ENCODE measurements at regions of chr19 and their contacts with region 1.

Region 1: DNA sequence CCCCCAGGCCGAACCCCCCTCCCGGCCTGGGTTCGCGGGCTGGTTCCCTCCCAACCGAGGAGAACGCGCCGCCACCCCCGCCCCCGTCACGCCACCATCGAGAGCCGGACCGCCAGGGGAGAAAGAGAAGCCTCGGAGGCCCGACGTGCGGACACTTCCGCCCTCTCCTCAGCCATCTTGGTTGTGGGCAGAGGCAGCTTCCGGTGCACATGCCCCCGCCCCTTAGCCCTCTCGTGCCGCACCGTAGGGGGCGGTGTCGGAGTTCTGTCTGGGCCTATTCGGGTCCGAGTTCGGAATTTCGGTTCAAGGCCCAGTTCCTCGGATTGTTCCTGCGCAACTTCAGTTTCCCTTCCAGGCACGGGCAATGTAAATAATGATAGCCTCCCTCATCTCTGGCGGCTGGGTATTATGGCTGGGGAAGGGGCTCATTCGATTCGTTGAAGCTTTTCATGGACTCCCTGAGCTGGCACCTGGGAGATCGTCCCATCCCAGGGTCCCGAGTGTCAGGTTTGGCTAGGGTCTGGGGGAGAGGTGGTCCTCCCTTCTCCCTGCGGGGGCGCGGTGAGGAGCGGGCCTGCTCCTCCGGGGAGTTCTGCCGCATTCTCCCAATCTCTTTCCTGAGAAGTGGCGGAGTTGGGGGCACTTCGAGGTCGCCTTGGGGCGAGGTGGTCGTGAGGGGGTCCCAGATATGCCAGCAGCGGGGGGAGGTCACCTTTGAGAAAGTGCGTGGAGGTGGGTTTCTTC is at the starts of genes IER2 and STX10:
- DNase-seq: peak; percentile 97 to 98 (median 97)
- ATAC-seq: peak; percentile 73 to 78 (median 78)
- H3K4me3 ChIP-seq: peak within 1 kb of the TSS; percentile 45 to 98 (median 91)
- H3K27ac ChIP-seq: peak within 1 kb of the TSS; percentile 87 to 100 (median 98)
- H3K4me1 ChIP-seq: peaks cover 0 to 35% (median 14%) of the 10 kb centered on the region in 12 donors
- H3K27me3 ChIP-seq: no peaks in the 10 kb centered on the region
- CTCF ChIP-seq: peak; percentile 44 to 85 (median 64)
- POLR2A ChIP-seq: peak in 1 of 2 donors; percentile 76
- total RNA-seq, gene IER2: 17.6 to 101 (median 29.1) TPM
- total RNA-seq, gene STX10: 24.0 to 48.8 (median 35.8) TPM

Region 2: DNA sequence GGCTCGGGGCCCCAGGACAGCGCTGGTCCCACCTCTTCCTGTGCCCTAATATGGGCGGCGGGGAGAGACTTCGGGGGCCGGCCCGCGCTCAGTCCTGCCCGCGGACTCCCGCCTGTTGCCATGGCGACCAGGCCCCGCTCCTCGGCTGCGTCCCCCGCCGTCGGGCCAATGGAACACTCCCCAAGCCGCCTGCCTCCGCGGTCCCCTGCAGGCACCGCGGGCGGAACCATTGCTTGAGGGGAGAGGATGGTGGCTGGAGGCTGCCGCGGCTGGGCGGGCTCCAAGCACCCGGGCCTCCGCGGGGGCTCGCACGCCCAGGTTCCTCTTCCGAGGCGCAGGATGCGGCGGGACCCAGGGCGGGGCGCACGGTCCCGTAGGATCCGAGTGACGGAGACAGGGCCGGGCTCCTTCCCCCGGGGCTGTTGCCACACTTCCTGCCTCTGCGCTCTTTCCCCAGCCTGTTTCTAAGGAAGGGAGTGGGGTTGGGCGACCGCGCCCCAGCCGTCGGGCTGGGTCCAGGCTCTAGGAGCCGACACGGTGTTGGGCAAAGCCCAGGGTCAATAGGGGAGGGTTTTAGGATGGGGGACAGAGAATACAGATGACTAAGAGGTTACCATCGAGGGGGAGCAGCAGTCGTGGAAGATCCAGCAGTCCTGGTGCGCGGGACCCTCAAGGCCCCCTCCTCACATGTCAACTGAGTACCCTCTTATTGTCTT is 360.3 kb before region 1 on chr19:
- intact Hi-C with region 1: loop called in 1 of 10 experiments (anchors 10 kb)
- DNase-seq: peak; percentile 98 to 99 (median 98)
- ATAC-seq: peak; percentile 44 to 62 (median 54)
- H3K4me3 ChIP-seq: peak overlapping the region; percentile 15 to 99 (median 84)
- H3K27ac ChIP-seq: peak overlapping the region; percentile 95 to 100 (median 99)
- H3K4me1 ChIP-seq: peaks cover 0 to 65% (median 54%) of the 10 kb centered on the region in 12 donors
- H3K27me3 ChIP-seq: no peaks in the 10 kb centered on the region
- CTCF ChIP-seq: no peak
- POLR2A ChIP-seq: peak in 1 of 2 donors; percentile 83

Region 3: GRCh38 chr19:13104360-13104847 is 46.0 kb before region 1 on chr19:
- intact Hi-C with region 1: loop called in 8 of 10 experiments (anchors 2 to 5 kb)
- DNase-seq: peak; percentile 83 to 89 (median 88)
- ATAC-seq: peak; percentile 15 to 58 (median 22)
- H3K4me3 ChIP-seq: peak overlapping the region in 9 of 12 donors; percentile 8 to 60 (median 27)
- H3K27ac ChIP-seq: peak overlapping the region; percentile 43 to 98 (median 92)
- H3K4me1 ChIP-seq: peaks cover 6 to 61% (median 44%) of the 10 kb centered on the region in 12 donors
- H3K27me3 ChIP-seq: no peaks in the 10 kb centered on the region
- CTCF ChIP-seq: peak; percentile 49 to 82 (median 66)
- POLR2A ChIP-seq: no peak

Region 4: DNA sequence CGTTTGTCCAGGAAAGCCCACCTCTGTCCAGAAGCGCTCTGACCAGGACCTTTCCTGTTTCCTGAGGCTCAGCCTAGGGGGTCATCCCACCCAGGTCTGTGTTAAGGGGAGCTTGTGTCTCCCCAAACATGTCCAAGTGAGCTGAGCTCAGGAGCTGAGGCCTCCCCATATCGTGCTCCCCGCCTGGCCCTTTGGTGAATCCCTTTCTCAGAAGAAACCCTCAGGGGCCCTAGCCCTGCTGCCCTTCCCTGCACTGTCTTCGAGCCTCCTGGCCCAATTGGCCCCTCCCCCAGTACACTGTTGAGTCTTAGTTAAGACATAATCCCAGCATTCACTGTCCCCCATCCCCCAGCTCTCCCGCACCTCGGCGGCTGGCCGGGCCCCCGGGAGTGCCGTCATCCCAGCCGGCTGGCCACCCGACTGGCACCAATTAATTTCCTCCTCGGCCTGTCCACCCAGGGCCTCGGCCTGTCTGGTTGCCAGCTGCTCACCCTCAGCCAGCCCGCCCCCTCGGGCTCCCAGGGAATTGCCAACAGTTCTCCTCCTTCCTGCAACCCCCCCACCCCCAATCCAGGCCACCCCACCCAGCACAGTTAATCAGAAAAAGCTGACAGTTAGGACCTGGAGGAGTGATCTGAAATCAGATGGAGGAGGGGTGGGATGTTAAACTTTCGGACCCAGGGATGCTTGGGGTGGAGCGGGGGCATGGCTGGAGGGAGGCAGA is 13.4 kb after region 1 on chr19:
- intact Hi-C with region 1: loop called in 1 of 10 experiments (anchors 2 kb)
- DNase-seq: peak; percentile 72 to 83 (median 76)
- ATAC-seq: peak; percentile 15 to 53 (median 34)
- H3K4me3 ChIP-seq: peak overlapping the region in 10 of 12 donors; percentile 32 to 62 (median 52)
- H3K27ac ChIP-seq: peak overlapping the region; percentile 84 to 99 (median 96)
- H3K4me1 ChIP-seq: peaks cover 8 to 83% (median 50%) of the 10 kb centered on the region in 12 donors
- H3K27me3 ChIP-seq: no peaks in the 10 kb centered on the region
- CTCF ChIP-seq: no peak
- POLR2A ChIP-seq: no peak

Region 5: GRCh38 chr19:13839130-13839937 is 689.0 kb after region 1 on chr19:
- intact Hi-C with region 1: loop called in 2 of 10 experiments (anchors 5 to 10 kb)
- DNase-seq: peak; percentile 93 to 97 (median 96)
- ATAC-seq: peak; percentile 58 to 77 (median 72)
- H3K4me3 ChIP-seq: peak overlapping the region; percentile 72 to 99 (median 96)
- H3K27ac ChIP-seq: peak overlapping the region; percentile 99 to 100 (median 100)
- H3K4me1 ChIP-seq: peaks cover 27 to 75% (median 56%) of the 10 kb centered on the region in 12 donors
- H3K27me3 ChIP-seq: no peaks in the 10 kb centered on the region
- CTCF ChIP-seq: peak in 3 of 12 donors; percentile 8 to 16 (median 8)
- POLR2A ChIP-seq: peak; percentile 32 to 42

Measured in heart left ventricle (tissue), 16 donors.